ENCODE measurements at regions of chr10 and their contacts with region 1.

Region 1: GRCh38 chr10:122298598-122299301 is 27.7 kb downstream of the BTBD16 start:
- DNase-seq: peak; percentile 85
- H3K4me3 ChIP-seq: no peak overlapping the region
- H3K27ac ChIP-seq: no peak overlapping the region
- H3K4me1 ChIP-seq: no peaks in the 10 kb centered on the region
- H3K27me3 ChIP-seq: no peaks in the 10 kb centered on the region
- CTCF ChIP-seq: peak; percentile 81 to 96
- POLR2A ChIP-seq: no peak

Region 2: DNA sequence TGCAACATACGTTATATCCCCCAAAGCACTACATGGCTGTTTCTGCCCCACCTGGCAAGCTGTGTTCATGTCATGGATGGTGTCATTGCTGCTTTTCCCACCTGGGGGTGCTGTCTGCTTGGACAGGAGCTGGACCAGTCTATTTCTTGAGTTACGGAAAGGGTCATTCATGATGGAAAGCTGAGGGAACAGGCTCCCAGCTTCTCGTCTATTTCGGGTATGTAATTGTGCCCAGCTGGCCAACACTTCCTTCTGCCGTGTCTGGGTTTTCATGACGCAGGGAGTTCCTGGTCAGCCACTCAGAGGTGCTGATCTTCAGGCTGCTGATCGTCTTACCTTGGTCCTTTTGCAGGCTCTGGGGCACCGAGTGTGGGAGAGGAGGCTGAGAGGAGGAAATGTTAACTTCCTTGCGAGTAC is 19.0 kb before region 1 on chr10:
- CTCF ChIA-PET with region 1: interaction called, 31 read pairs
- POLR2A ChIA-PET with region 1: no interaction called
- dilution Hi-C with region 1: no loop called
- intact Hi-C with region 1: no loop called
- DNase-seq: peak; percentile 74
- H3K4me3 ChIP-seq: no peak overlapping the region
- H3K27ac ChIP-seq: no peak overlapping the region
- H3K4me1 ChIP-seq: peaks cover 2% of the 10 kb centered on the region
- H3K27me3 ChIP-seq: no peaks in the 10 kb centered on the region
- CTCF ChIP-seq: peak; percentile 77 to 81
- POLR2A ChIP-seq: no peak

Region 3: GRCh38 chr10:122342293-122343134 is 43.8 kb after region 1 on chr10:
- CTCF ChIA-PET with region 1: interaction called, 50 read pairs
- POLR2A ChIA-PET with region 1: no interaction called
- dilution Hi-C with region 1: no loop called
- intact Hi-C with region 1: loop called (anchors 1 kb)
- DNase-seq: peak; percentile 71
- H3K4me3 ChIP-seq: no peak overlapping the region
- H3K27ac ChIP-seq: no peak overlapping the region
- H3K4me1 ChIP-seq: no peaks in the 10 kb centered on the region
- H3K27me3 ChIP-seq: no peaks in the 10 kb centered on the region
- CTCF ChIP-seq: peak; percentile 64 to 84
- POLR2A ChIP-seq: no peak

Region 4: GRCh38 chr10:122404576-122404975 is 105.8 kb after region 1 on chr10:
- CTCF ChIA-PET with region 1: interaction called, 12 read pairs
- POLR2A ChIA-PET with region 1: no interaction called
- dilution Hi-C with region 1: no loop called
- intact Hi-C with region 1: no loop called
- DNase-seq: peak; percentile 75
- H3K4me3 ChIP-seq: no peak overlapping the region
- H3K27ac ChIP-seq: no peak overlapping the region
- H3K4me1 ChIP-seq: peaks cover 2% of the 10 kb centered on the region
- H3K27me3 ChIP-seq: no peaks in the 10 kb centered on the region
- CTCF ChIP-seq: no peak
- POLR2A ChIP-seq: no peak

Region 5: GRCh38 chr10:122468926-122469781 is 170.4 kb after region 1 on chr10:
- CTCF ChIA-PET with region 1: interaction called, 12 read pairs
- POLR2A ChIA-PET with region 1: no interaction called
- dilution Hi-C with region 1: no loop called
- intact Hi-C with region 1: no loop called
- DNase-seq: peak; percentile 64
- H3K4me3 ChIP-seq: no peak overlapping the region
- H3K27ac ChIP-seq: peak overlapping the region; percentile 32
- H3K4me1 ChIP-seq: peaks cover 27% of the 10 kb centered on the region
- H3K27me3 ChIP-seq: no peaks in the 10 kb centered on the region
- CTCF ChIP-seq: no peak
- POLR2A ChIP-seq: no peak

Region 6: DNA sequence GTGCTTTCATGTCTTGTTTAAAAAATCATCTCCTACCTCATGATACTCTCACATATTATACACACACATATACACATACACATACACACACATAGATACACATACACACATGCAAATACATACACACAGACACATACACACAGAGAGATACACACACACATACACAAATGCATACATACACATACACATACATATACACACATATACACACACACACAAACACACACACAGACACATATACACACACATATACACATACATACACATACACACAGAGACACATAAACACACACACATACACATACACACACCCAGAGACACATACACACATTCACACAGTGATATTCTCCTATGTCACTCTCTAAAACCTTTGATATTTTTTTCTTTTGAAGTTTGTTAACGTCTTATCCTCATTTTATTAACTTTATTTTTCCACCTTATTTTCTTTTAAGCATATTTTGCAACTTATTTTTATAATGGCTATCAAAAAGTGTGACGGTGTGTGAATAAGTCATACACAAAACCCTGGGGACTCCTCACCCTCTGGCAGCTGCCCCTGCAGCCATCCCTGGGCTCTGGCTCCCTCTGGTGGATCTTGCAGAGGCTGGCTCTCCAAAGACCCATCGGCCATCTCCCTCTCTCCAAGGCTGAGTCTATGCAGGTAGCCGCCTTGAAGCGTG is 404.8 kb after region 1 on chr10:
- CTCF ChIA-PET with region 1: interaction called, 8 read pairs
- POLR2A ChIA-PET with region 1: no interaction called
- dilution Hi-C with region 1: no loop called
- intact Hi-C with region 1: loop called (anchors 1 kb)
- DNase-seq: peak; percentile 55
- H3K4me3 ChIP-seq: no peak overlapping the region
- H3K27ac ChIP-seq: no peak overlapping the region
- H3K4me1 ChIP-seq: no peaks in the 10 kb centered on the region
- H3K27me3 ChIP-seq: peaks cover 0 to 2% of the 10 kb centered on the region in 2 experiments
- CTCF ChIP-seq: peak; percentile 74 to 90
- POLR2A ChIP-seq: no peak